ENCODE measurements at regions of chr16 and their contacts with region 1.

Region 1: DNA sequence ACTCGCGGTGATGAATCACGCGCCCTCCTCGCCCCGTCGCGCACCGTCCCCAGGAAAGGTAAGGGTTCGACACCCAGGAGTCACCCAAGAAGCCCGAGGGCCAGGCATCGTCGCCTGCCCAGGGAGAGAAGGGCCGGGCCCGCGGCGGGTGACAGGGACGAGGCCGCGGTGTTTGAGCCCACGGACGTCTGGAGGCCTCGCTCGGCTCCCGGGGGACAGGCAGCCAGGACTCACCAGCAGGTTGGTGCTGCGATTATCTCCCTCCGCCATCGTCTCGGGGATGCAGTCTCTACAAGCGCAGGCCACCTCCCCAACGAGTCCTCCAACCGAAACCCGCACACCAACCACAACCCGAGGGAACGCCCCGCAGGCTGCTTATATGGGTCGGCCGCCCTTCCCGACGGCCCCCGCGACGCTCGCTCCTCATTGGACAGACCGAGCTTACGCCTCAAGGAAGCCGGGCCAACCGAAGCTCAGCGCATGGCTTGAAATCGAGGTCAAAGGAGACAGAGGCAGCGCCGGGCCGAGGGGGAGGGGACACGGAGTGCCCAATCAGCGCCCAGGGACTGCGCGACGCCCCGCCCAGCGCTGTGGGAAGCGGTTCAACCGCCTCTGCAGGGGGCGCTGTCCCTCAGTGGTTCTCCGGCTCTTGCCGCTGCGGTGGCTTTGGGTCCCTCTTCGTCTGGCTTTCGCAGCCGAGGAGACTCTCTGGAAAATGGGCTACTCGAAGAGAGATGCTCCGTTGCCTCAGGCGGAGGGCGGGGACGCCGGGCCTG is at the start of gene ARL6IP1:
- DNase-seq: peak; percentile 98 to 100 (median 99)
- ATAC-seq: peak; percentile 93
- H3K4me3 ChIP-seq: peak within 1 kb of the TSS; percentile 98
- H3K4me3 Mint-ChIP-seq: peak within 1 kb of the TSS; percentile 96
- H3K27ac ChIP-seq: peak within 1 kb of the TSS; percentile 91
- H3K27ac Mint-ChIP-seq: peak within 1 kb of the TSS; percentile 88
- H3K4me1 ChIP-seq: peaks cover 44% of the 10 kb centered on the region
- H3K4me1 Mint-ChIP-seq: peaks cover 49% of the 10 kb centered on the region
- H3K27me3 ChIP-seq: no peaks in the 10 kb centered on the region
- H3K27me3 Mint-ChIP-seq: no peaks in the 10 kb centered on the region
- CTCF ChIP-seq: peak; percentile 84
- total RNA-seq, gene ARL6IP1: 109 to 111 TPM

Region 2: GRCh38 chr16:18816286-18816685 is 14.9 kb after region 1 on chr16:
- CTCF ChIA-PET with region 1: interaction called, 12 read pairs
- POLR2A ChIA-PET with region 1: interaction called, 20 read pairs
- intact Hi-C with region 1: no loop called
- DNase-seq: no peak
- ATAC-seq: no peak
- H3K4me3 ChIP-seq: no peak overlapping the region
- H3K4me3 Mint-ChIP-seq: no peak overlapping the region
- H3K27ac ChIP-seq: no peak overlapping the region
- H3K27ac Mint-ChIP-seq: no peak overlapping the region
- H3K4me1 ChIP-seq: peaks cover 9% of the 10 kb centered on the region
- H3K4me1 Mint-ChIP-seq: peaks cover 14% of the 10 kb centered on the region
- H3K27me3 ChIP-seq: no peaks in the 10 kb centered on the region
- H3K27me3 Mint-ChIP-seq: no peaks in the 10 kb centered on the region
- CTCF ChIP-seq: no peak

Region 3: GRCh38 chr16:18846416-18846815 is 45.0 kb after region 1 on chr16:
- CTCF ChIA-PET with region 1: interaction called, 10 read pairs
- POLR2A ChIA-PET with region 1: no interaction called
- intact Hi-C with region 1: loop called in 1 of 2 experiments (anchors 5 kb)
- DNase-seq: no peak
- ATAC-seq: no peak
- H3K4me3 ChIP-seq: no peak overlapping the region
- H3K4me3 Mint-ChIP-seq: no peak overlapping the region
- H3K27ac ChIP-seq: no peak overlapping the region
- H3K27ac Mint-ChIP-seq: no peak overlapping the region
- H3K4me1 ChIP-seq: no peaks in the 10 kb centered on the region
- H3K4me1 Mint-ChIP-seq: no peaks in the 10 kb centered on the region
- H3K27me3 ChIP-seq: no peaks in the 10 kb centered on the region
- H3K27me3 Mint-ChIP-seq: no peaks in the 10 kb centered on the region
- CTCF ChIP-seq: no peak

Region 4: DNA sequence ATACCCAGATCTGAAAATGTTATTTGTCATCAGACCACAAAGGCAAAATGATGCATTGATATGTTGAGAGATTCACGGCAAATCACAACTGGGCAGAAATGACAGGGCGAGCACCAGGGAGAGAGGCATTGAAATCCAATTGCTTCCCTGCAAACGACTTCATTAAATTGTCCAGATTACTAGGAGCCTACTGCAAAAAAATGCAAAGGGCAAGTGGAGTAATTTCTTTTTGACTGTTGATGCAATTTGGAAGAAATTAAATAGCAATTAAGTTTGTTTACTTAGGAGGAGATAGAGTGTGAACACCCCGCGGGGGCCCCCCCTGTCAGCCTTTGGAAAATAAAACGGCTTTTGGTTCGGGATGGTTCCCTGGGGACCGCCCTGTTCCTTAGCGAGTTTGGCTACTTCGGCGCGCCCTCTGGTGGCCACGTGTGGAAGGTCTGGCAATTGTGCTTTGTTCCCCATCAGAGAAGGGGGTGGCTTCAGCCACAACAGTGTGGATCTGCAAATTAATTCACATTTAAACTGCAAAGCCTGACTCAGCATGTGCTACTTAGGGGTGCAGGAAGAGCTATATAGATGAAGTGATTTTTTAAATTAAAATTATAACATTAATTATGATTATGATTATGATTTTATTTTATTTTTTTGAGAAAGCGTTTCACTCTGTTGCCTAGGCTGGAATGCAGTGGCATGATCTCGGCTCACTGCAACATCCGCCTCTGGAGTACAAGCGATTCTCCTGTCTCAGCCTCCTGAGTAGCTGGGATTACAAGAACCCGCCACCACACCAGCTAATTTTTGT is 167.9 kb after region 1 on chr16:
- CTCF ChIA-PET with region 1: interaction called, 3 read pairs
- POLR2A ChIA-PET with region 1: interaction called, 5 read pairs
- intact Hi-C with region 1: loop called (anchors 1 kb)
- DNase-seq: peak; percentile 50 to 86 (median 74)
- ATAC-seq: peak; percentile 72
- H3K4me3 ChIP-seq: peak overlapping the region; percentile 19
- H3K4me3 Mint-ChIP-seq: no peak overlapping the region
- H3K27ac ChIP-seq: no peak overlapping the region
- H3K27ac Mint-ChIP-seq: no peak overlapping the region
- H3K4me1 ChIP-seq: peaks cover 4% of the 10 kb centered on the region
- H3K4me1 Mint-ChIP-seq: no peaks in the 10 kb centered on the region
- H3K27me3 ChIP-seq: no peaks in the 10 kb centered on the region
- H3K27me3 Mint-ChIP-seq: no peaks in the 10 kb centered on the region
- CTCF ChIP-seq: peak; percentile 93

Region 5: DNA sequence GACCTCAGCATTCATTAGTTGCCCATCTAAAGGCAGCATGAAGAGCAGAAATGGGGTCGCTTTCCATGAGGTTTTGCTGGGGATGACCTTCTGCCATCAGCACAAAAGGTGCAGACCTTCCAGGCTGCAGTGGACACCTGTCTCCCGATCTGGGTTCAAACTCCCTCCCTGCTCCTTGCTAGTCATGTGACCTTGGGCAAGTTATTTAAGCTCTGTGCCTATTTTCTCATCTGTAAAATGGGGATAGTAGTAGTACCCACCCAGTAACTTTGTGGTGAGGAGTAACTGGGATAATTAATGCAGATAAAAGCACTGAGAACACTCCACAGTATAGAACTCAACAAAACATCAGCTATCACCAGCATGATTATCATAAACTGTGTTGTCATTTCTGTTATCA is 244.7 kb after region 1 on chr16:
- CTCF ChIA-PET with region 1: no interaction called
- POLR2A ChIA-PET with region 1: no interaction called
- intact Hi-C with region 1: no loop called
- DNase-seq: no peak
- ATAC-seq: no peak
- H3K4me3 ChIP-seq: no peak overlapping the region
- H3K4me3 Mint-ChIP-seq: no peak overlapping the region
- H3K27ac ChIP-seq: no peak overlapping the region
- H3K27ac Mint-ChIP-seq: no peak overlapping the region
- H3K4me1 ChIP-seq: no peaks in the 10 kb centered on the region
- H3K4me1 Mint-ChIP-seq: no peaks in the 10 kb centered on the region
- H3K27me3 ChIP-seq: no peaks in the 10 kb centered on the region
- H3K27me3 Mint-ChIP-seq: peaks cover 4% of the 10 kb centered on the region
- CTCF ChIP-seq: no peak

Region 6: GRCh38 chr16:19502395-19503131 is 701.2 kb after region 1 on chr16:
- CTCF ChIA-PET with region 1: no interaction called
- POLR2A ChIA-PET with region 1: no interaction called
- intact Hi-C with region 1: no loop called
- DNase-seq: peak; percentile 27 to 78 (median 54)
- ATAC-seq: peak; percentile 52
- H3K4me3 ChIP-seq: no peak overlapping the region
- H3K4me3 Mint-ChIP-seq: no peak overlapping the region
- H3K27ac ChIP-seq: no peak overlapping the region
- H3K27ac Mint-ChIP-seq: no peak overlapping the region
- H3K4me1 ChIP-seq: no peaks in the 10 kb centered on the region
- H3K4me1 Mint-ChIP-seq: no peaks in the 10 kb centered on the region
- H3K27me3 ChIP-seq: no peaks in the 10 kb centered on the region
- H3K27me3 Mint-ChIP-seq: no peaks in the 10 kb centered on the region
- CTCF ChIP-seq: peak; percentile 73

Region 7: GRCh38 chr16:19717771-19718602 is 916.6 kb after region 1 on chr16 and contains the starts of genes IQCK and KNOP1:
- CTCF ChIA-PET with region 1: no interaction called
- POLR2A ChIA-PET with region 1: no interaction called
- intact Hi-C with region 1: loop called in 1 of 2 experiments (anchors 5 kb)
- DNase-seq: peak; percentile 74 to 98 (median 84)
- ATAC-seq: peak; percentile 93
- H3K4me3 ChIP-seq: peak within 1 kb of the TSS; percentile 73
- H3K4me3 Mint-ChIP-seq: peak within 1 kb of the TSS; percentile 93
- H3K27ac ChIP-seq: peak within 1 kb of the TSS in 1 of 2 donors; percentile 30
- H3K27ac Mint-ChIP-seq: peak within 1 kb of the TSS; percentile 33
- H3K4me1 ChIP-seq: peaks cover 23% of the 10 kb centered on the region
- H3K4me1 Mint-ChIP-seq: peaks cover 40% of the 10 kb centered on the region
- H3K27me3 ChIP-seq: no peaks in the 10 kb centered on the region
- H3K27me3 Mint-ChIP-seq: no peaks in the 10 kb centered on the region
- CTCF ChIP-seq: no peak
- total RNA-seq, gene IQCK: 1.6 to 1.7 TPM
- total RNA-seq, gene KNOP1: 3.5 to 4.1 TPM